Activated B cell treated with CpG ODN at 0.5 μM for 24 hours (primary cell): ENCODE measurements at regions of chr1 and their contacts with region 1.

Region 1: DNA sequence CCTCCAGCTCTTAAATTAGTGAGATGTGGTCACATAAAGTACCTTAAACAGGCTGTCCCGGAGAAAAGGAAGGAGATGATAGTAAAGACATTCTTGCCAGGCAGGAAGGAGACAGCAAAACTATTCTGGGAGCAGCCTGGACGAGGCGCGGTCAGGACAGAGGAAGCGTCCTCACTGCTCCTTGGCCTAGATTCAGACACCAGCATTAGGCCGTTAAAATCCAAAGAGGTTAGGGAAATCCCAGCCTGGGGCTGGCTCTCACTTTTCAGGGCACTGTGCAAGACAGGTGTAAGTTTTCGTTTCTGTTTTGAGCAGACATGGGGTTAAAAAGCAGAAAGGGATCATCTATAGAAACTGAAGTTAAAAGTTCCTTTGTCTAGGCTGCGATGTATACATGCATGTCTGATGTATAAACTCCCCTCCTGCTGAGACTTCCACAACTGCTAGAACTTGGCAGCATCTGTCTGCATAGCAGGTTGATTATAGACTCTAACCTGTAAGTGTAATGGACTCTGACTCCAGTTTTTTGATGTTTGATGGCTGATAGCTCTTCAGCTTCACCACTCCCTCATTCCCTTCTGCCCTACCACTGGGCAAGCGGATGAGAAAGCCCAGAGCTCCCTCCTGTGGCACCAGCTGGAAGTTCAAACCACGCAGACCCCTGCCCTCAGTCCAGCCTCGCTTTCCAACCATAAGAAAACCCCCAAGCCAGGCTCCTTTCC is 21.5 kb downstream of the STPG1 start:
- DNase-seq: peak; percentile 56
- ATAC-seq: peak; percentile 77
- H3K4me3 Mint-ChIP-seq: peak overlapping the region; percentile 82
- H3K27ac Mint-ChIP-seq: peak overlapping the region; percentile 96
- H3K4me1 Mint-ChIP-seq: peaks cover 43% of the 10 kb centered on the region
- H3K27me3 Mint-ChIP-seq: no peaks in the 10 kb centered on the region
- CTCF ChIP-seq: no peak

Region 2: DNA sequence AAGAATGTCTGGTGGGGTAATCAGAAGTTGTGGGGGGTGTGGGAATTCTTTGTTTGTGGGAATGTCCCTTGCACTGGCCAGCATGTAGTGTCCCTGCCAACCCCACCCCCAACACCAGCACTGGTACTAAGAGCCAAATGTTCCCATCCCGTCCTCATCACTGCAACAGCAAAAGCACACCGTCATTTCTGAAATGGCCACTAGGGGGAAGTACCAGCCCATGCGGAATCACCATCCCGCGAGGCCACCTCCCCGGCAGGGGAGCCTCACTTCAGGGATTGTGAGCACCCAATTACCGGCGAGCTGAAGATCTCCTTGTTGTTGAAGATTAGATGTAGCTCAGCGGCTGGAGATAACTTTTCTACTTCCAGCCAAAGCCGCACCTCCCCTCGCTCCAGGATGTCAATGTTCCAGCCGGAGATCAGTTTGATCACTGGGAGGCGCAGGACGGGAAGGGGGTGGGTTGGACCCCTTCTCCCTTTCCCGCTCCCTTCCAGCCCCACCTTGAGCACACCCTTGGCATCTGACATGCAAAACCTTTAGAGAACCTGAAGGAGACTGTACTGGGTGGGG is 321.1 kb before region 1 on chr1:
- CTCF ChIA-PET with region 1: interaction called, 41 read pairs
- POLR2A ChIA-PET with region 1: no interaction called
- intact Hi-C with region 1: loop called (anchors 1 kb)
- DNase-seq: peak; percentile 51
- ATAC-seq: peak; percentile 96
- H3K4me3 Mint-ChIP-seq: no peak overlapping the region
- H3K27ac Mint-ChIP-seq: no peak overlapping the region
- H3K4me1 Mint-ChIP-seq: no peaks in the 10 kb centered on the region
- H3K27me3 Mint-ChIP-seq: peaks cover 2% of the 10 kb centered on the region
- CTCF ChIP-seq: peak; percentile 85

Region 3: GRCh38 chr1:24321697-24322469 is 70.2 kb before region 1 on chr1:
- CTCF ChIA-PET with region 1: interaction called, 20 read pairs
- POLR2A ChIA-PET with region 1: interaction called, 8 read pairs
- intact Hi-C with region 1: loop called (anchors 5 kb)
- DNase-seq: peak; percentile 59
- ATAC-seq: peak; percentile 77
- H3K4me3 Mint-ChIP-seq: peak overlapping the region; percentile 83
- H3K27ac Mint-ChIP-seq: peak overlapping the region; percentile 72
- H3K4me1 Mint-ChIP-seq: peaks cover 49% of the 10 kb centered on the region
- H3K27me3 Mint-ChIP-seq: peaks cover 34% of the 10 kb centered on the region
- CTCF ChIP-seq: no peak

Region 4: GRCh38 chr1:24443241-24443656 is 51.2 kb after region 1 on chr1:
- CTCF ChIA-PET with region 1: no interaction called
- POLR2A ChIA-PET with region 1: no interaction called
- intact Hi-C with region 1: no loop called
- DNase-seq: no peak
- ATAC-seq: no peak
- H3K4me3 Mint-ChIP-seq: no peak overlapping the region
- H3K27ac Mint-ChIP-seq: no peak overlapping the region
- H3K4me1 Mint-ChIP-seq: no peaks in the 10 kb centered on the region
- H3K27me3 Mint-ChIP-seq: no peaks in the 10 kb centered on the region
- CTCF ChIP-seq: no peak

Region 5: DNA sequence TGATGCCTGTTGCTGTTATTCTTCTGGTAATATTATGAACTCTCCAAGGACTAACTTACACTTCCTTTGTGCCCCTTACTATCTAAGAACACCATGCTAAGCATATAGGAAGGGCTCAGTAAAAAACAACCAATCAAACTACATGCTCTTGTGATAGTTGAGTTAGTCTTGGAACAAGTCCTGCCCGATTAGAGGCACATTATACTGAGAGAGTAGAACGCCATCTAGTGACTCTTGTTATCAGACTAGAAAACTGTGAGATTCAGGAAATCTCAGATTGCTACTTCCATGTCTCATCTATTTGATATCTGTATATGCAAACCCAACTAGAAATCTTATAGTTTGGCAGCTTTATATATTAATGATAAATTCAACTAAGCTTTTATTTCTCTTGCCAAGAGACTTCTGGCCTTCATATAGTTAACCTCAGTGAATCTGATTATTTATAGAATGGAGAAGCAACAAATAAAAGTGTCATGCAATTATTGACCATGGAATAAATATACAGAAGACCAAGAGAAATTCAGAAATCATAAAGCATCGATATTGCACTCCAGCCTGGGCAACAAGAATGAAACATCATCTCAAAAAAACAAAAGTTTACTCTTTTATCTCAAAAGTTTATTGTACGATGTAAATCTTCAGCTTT is 243.3 kb after region 1 on chr1:
- CTCF ChIA-PET with region 1: interaction called, 7 read pairs
- POLR2A ChIA-PET with region 1: no interaction called
- intact Hi-C with region 1: loop called (anchors 5 kb)
- DNase-seq: no peak
- ATAC-seq: peak; percentile 69
- H3K4me3 Mint-ChIP-seq: no peak overlapping the region
- H3K27ac Mint-ChIP-seq: no peak overlapping the region
- H3K4me1 Mint-ChIP-seq: peaks cover 2% of the 10 kb centered on the region
- H3K27me3 Mint-ChIP-seq: peaks cover 2% of the 10 kb centered on the region
- CTCF ChIP-seq: no peak